HEK293 (cell line): ENCODE measurements at regions of chr2 and their contacts with region 1.

Region 1: GRCh38 chr2:224650815-224651439 is 65.2 kb downstream of the CCDC195 start:
- H3K4me3 ChIP-seq: no peak overlapping the region
- H3K27ac ChIP-seq: no peak overlapping the region
- H3K4me1 ChIP-seq: no peaks in the 10 kb centered on the region
- CTCF ChIP-seq: peak; percentile 57; the same call in 1 of the 2 replicates

Region 2: DNA sequence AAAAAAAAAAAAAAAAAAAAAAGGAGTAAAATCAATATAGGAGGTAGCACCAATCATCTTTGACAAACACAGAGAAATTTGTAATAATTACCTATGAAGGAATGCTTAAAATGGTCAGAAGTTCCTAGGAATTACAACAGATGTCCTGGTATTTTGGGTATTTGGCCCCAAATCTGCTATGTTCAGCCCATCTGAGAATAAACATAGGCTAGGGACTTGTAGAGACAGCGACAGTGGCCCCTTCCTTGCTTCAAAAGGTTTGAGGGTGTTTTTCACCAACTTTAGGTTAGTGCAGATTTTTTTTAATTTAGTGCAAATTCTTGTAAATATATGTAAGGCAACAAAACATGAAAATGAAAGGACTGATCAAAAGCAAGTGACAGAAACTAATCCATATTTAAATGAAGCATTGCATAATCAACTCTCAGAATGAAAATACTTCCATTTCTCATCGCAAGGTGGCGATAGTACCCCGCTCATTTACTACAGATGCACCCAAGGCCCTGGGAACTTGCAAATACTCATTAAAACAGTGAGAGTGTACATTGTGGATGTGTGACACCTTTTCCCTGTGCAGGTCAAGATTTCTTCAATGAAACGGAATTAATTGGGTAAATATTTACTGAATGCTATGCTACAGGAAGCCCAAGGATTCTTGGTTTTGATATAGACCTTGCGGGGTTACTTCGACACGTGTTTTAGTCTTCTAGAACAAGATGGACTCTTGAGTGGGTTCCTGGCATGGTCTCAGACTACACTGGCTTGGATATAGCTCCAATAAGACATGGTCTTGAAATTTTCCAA is 293.6 kb before region 1 on chr2:
- CTCF ChIA-PET with region 1: interaction called, 24 read pairs
- POLR2A ChIA-PET with region 1: no interaction called
- H3K4me3 ChIP-seq: no peak overlapping the region
- H3K27ac ChIP-seq: no peak overlapping the region
- H3K4me1 ChIP-seq: peaks cover 4% of the 10 kb centered on the region; the same call in 1 of the 2 replicates
- CTCF ChIP-seq: peak; percentile 50; the same call in 1 of the 2 replicates

Region 3: DNA sequence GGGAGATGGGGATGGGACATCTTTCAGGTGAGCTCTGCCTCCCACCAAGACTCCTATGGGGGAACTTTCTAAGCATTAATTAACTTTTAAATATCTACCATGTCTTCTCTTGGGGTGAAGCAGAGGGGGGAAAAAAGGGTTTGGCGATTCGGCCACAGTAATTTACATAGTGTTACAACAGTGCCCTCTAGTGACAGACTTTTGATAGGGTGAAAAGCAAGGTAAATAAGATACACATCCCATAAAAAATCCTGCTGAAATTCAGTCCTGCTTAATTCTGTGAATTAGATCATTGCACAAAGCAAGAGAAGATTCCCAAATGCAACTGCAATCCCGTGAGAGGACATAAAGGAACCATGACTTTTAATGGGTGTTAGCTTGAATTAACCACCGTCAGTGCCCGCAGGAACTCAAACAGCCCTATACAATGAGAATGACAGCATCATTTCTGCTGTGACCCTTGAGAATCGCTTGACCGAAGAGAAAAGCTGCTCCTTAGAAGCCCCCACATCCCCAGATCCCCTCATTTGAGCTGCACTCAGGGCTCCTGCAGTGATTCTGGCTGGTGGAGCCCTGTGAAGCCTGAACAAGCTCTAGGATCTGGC is 281.8 kb before region 1 on chr2:
- CTCF ChIA-PET with region 1: interaction called, 18 read pairs
- POLR2A ChIA-PET with region 1: no interaction called
- H3K4me3 ChIP-seq: no peak overlapping the region
- H3K27ac ChIP-seq: no peak overlapping the region
- H3K4me1 ChIP-seq: no peaks in the 10 kb centered on the region
- CTCF ChIP-seq: peak; percentile 33

Region 4: GRCh38 chr2:224666951-224667553 is 16.1 kb after region 1 on chr2:
- CTCF ChIA-PET with region 1: interaction called, 15 read pairs
- POLR2A ChIA-PET with region 1: no interaction called
- H3K4me3 ChIP-seq: no peak overlapping the region
- H3K27ac ChIP-seq: no peak overlapping the region; the same call in 1 of the 2 replicates
- H3K4me1 ChIP-seq: peaks cover 12% of the 10 kb centered on the region
- CTCF ChIP-seq: no peak

Region 5: GRCh38 chr2:224778474-224778877 is 127.5 kb after region 1 on chr2:
- CTCF ChIA-PET with region 1: interaction called, 13 read pairs
- POLR2A ChIA-PET with region 1: no interaction called
- H3K4me3 ChIP-seq: no peak overlapping the region
- H3K27ac ChIP-seq: no peak overlapping the region
- H3K4me1 ChIP-seq: no peaks in the 10 kb centered on the region
- CTCF ChIP-seq: peak; percentile 35; the same call in 1 of the 2 replicates